GM18951 (cell line): ENCODE measurements at regions of chr1 and their contacts with region 1.

Region 1: GRCh38 chr1:16187748-16188401 is 24.6 kb downstream of the ARHGEF19 start:
- POLR2A ChIP-seq: no peak

Region 2: DNA sequence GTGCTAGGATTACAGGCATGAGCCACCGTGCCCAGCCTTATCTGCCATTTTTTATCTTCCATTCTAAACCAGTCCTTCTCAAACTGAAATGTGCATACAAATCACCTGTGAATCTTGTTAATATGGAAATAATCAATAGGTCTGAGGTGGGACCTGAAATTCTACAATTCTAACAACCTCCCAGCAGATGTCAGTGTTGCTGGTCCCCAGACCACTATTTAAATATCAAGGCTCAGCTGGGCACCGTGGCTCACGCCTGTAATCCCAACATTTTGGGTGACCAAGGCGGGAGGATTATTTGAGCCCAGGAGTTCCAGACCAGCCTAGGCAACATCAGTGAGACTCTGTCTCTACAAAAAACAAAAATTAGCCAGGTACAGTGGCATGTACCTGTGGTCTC is 384.5 kb before region 1 on chr1:
- in situ Hi-C with region 1: loop called (anchors 25 kb)
- POLR2A ChIP-seq: no peak

Region 3: GRCh38 chr1:16078925-16079656 is 108.8 kb before region 1 on chr1:
- in situ Hi-C with region 1: loop called (anchors 10 kb)
- POLR2A ChIP-seq: no peak

Region 4: DNA sequence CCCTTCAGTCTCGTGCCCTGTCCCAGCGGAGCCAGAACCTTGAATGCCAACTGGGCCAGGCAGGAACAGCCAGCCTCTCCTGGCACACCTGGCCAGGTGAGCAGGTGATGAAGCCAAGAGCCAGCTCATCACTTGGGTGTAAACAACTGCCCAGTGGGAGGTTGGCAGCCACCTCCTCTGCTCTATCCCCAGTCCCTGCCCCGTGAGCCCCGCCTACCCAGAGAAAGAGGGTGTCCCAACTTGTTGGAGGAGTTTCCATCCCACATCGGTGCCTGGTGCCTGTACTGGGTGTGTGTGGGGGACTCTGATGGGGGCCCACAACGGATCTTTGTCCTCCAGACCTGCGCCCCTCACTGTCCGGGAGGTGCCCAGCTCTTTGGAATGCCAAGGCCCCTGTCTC is 96.6 kb before region 1 on chr1:
- in situ Hi-C with region 1: loop called (anchors 10 kb)
- POLR2A ChIP-seq: no peak